Dendritic cell treated with granulocyte-macrophage colony-stimulating factor and Interleukin-4, amounts not matched to agents 40 ng/mL and 50 ng/mL, for 4 days (primary cell): ENCODE measurements at regions of chr7 and their contacts with region 1.

Region 1: DNA sequence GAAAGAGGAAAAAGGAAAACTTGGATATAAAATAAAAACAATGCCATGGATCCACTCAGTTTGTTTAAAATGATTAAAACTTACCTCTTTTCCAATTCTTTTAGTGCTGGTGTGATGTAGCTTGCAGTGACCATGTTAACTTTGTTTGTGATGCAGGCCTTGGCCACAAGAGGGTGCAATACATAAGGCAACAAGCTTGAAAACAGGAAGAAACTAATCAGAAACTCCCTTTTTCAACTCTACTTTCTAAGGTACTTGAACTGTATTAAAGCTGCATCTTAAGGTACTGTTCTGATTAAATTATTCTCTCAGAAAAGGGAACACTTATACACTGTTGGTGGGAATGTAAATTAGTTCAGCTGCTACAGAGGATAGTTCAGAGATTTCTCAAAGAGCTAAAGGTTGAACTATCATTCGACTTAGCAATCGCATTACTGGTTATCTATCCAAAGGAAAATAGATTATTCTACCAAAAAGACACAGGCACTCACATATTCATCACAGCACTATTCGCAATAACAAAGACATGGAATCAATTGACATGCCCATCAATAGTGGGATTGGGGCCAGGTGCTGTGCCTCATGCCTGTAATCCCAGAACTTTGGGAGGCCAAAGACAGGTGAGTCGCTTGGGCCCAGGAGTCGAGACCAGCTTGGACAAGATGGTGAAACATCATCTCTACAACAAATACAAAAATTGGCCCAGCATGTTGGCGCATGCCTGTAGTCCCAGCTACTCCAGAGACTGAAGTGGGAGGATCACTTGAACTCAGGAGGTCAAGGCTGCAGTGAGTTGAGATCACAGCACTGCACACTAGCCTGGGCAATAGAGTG is 50.9 kb downstream of the AASS start:
- H3K4me3 Mint-ChIP-seq: no peak overlapping the region
- H3K27ac Mint-ChIP-seq: no peak overlapping the region
- H3K4me1 Mint-ChIP-seq: no peaks in the 10 kb centered on the region
- H3K27me3 Mint-ChIP-seq: no peaks in the 10 kb centered on the region

Region 2: DNA sequence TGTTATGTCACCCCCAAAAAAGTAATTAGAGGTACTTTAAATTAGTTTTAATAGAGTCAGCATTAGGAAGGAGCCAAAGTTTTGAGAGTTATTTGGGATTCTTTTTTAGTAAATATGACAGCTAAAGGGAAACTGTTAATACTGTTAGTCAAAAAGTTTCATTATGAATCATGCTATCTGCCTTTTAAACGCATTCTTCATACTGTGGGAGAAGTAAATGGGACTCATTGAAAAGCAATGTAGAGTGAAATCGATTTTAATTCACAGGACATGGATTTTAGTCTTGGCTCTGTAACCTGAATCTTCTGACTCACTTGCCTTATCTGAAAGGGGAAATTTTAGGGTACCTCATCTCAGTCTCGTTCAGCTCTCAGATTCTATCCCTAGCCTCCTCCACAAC is 54.3 kb before region 1 on chr7:
- intact Hi-C with region 1: loop called (anchors 10 kb)
- H3K4me3 Mint-ChIP-seq: no peak overlapping the region
- H3K27ac Mint-ChIP-seq: no peak overlapping the region
- H3K4me1 Mint-ChIP-seq: no peaks in the 10 kb centered on the region
- H3K27me3 Mint-ChIP-seq: no peaks in the 10 kb centered on the region

Region 3: GRCh38 chr7:122528879-122529481 is 435.8 kb after region 1 on chr7:
- intact Hi-C with region 1: loop called (anchors 2 kb)
- H3K4me3 Mint-ChIP-seq: no peak overlapping the region
- H3K27ac Mint-ChIP-seq: no peak overlapping the region
- H3K4me1 Mint-ChIP-seq: no peaks in the 10 kb centered on the region
- H3K27me3 Mint-ChIP-seq: no peaks in the 10 kb centered on the region